PC-3 (cell line): ENCODE measurements at regions of chr5 and their contacts with region 1.

Region 1: DNA sequence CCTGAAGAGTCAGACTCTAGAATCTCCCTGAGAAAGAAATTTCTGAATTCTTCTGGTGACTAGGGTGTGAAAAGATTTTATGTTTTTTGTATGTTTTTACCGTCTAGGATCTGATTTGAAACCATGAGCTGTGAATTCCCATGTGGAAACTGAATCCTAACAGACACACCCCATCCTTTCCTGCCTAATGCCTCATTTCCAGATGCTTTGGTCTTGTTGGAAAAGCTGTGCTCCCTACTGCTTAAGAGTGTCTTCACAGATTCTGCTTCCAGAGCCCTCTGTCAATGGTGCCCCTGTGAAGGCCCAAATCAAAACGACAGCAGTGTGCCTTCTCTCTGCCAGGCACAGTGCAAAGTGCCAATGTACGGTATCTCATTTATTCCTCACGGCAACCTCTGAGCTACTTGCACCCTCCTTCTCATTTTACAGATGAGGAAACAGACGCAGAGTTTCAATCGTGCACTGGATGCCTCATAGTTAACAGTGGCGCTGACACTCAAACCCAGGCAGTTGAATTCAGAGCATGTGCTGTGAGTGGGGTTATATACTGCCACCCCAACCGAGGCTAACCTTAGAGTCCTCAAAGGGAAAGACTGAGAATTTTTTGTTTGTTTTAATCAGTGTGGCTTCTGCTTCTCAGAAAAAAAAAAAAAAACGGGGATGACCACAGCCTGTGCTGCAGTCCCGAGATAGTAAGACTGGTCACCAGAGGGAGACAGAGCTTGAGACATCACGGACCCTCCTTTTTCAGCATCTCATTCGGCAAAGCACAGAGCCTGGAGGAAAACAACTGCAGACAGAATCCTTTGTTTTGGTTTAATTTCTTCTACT is 188.4 kb downstream of the SNCAIP start:
- DNase-seq: peak; percentile 54
- ATAC-seq: peak; percentile 76; the same call in 1 of the 2 replicates
- H3K4me3 ChIP-seq: no peak overlapping the region
- H3K27ac ChIP-seq: no peak overlapping the region
- H3K4me1 ChIP-seq: no peaks in the 10 kb centered on the region
- H3K27me3 ChIP-seq: no peaks in the 10 kb centered on the region
- CTCF ChIP-seq: peak; percentile 62

Region 2: GRCh38 chr5:122192497-122193496 is 307.7 kb before region 1 on chr5:
- CTCF ChIA-PET with region 1: no interaction called
- POLR2A ChIA-PET with region 1: no interaction called
- intact Hi-C with region 1: loop called (anchors 10 kb)
- DNase-seq: peak; percentile 65
- ATAC-seq: peak; percentile 75
- H3K4me3 ChIP-seq: no peak overlapping the region
- H3K27ac ChIP-seq: no peak overlapping the region
- H3K4me1 ChIP-seq: no peaks in the 10 kb centered on the region
- H3K27me3 ChIP-seq: 0 out of 2 replicates have a peak, but pooled peaks cover under 1% of the 10 kb centered on the region
- CTCF ChIP-seq: peak; percentile 65

Region 3: GRCh38 chr5:122774861-122775549 is 274.5 kb after region 1 on chr5 and contains the start of gene SNX2:
- CTCF ChIA-PET with region 1: no interaction called
- POLR2A ChIA-PET with region 1: no interaction called
- intact Hi-C with region 1: no loop called
- DNase-seq: peak; percentile 85
- ATAC-seq: peak; percentile 88
- H3K4me3 ChIP-seq: peak within 1 kb of the TSS; percentile 92
- H3K27ac ChIP-seq: no peak within 1 kb of the TSS
- H3K4me1 ChIP-seq: peaks cover 10% of the 10 kb centered on the region; the same call in 1 of the 2 replicates
- H3K27me3 ChIP-seq: no peaks in the 10 kb centered on the region
- CTCF ChIP-seq: peak; percentile 22; the same call in 1 of the 2 replicates
- total RNA-seq, gene SNX2: 30.5 and 33.7 TPM in 2 replicates

Region 4: DNA sequence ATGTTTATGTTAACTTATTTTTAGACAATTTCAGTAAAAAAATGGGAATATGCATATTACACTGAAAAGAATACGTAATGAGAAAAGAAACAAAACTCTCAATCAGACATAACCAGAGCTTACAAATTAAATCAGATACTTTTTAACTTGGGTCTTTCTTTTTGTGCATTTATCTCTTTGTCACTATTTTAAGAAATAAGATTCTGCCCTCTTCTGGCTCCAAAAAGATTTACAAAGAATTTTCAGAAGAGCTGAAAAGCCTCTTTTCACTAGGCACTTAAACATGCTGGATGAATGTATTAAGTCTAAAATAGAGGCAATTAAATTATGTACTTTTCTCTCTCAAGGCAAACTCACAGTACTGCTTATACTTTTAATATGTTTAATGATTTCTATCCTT is 867.3 kb after region 1 on chr5:
- CTCF ChIA-PET with region 1: interaction called, 3 read pairs
- POLR2A ChIA-PET with region 1: no interaction called
- intact Hi-C with region 1: loop called (anchors 5 kb)
- DNase-seq: peak; percentile 31
- ATAC-seq: no peak
- H3K4me3 ChIP-seq: no peak overlapping the region
- H3K27ac ChIP-seq: no peak overlapping the region
- H3K4me1 ChIP-seq: no peaks in the 10 kb centered on the region
- H3K27me3 ChIP-seq: no peaks in the 10 kb centered on the region
- CTCF ChIP-seq: peak; percentile 61